Activated CD8-positive, alpha-beta memory T cell treated with anti-CD3 and anti-CD28 coated beads, Interleukin-2, amount 10 ng/mL, durations not matched to agents 7 days and 5 days (primary cell): ENCODE measurements at regions of chr19 and their contacts with region 1.

Region 1: DNA sequence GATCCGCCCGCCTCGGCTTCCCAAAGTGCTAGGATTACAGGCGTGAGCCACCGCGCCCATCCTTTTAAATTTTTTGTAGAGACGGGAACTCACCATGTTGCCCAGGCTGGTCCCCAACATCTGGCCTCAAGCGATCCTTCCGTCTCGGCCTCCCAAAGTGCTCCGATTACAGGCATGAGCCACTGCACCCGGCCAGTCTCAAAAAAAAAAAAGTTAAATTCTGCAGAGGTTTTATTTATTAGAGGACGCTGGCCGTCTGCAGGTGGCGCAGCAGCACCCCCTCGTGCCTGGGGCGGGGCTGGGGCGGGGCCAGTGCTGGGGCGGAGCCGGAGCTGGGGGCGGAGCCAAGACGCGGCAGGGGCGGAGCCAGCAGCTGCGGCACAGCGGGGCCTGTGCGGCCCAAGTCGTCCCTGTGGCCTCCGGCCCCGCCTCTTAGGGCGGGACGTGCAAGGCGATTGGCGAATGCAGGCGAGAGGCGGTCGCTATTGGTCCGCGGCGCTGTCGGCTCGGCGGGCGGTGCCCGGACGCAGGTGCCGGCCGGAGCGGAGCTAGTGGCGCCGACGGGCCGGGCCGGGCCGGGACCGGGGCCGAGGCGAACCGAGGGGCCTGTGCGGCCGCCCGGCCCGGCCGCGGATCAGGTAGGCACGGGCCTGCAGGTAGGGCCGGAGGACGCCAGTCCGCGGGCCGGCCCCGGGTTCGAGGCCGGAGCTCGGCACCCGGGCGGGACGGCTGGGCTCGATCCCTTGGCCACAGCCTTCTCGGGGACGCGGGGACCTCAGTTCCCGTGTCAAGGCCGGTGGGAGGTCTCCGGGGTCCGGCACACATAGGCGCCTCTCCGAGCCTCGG is at the start of gene MARCHF2:
- DNase-seq: peak; percentile 97
- ATAC-seq: peak; percentile 100
- H3K4me3 Mint-ChIP-seq: peak within 1 kb of the TSS; percentile 54
- H3K27ac Mint-ChIP-seq: peak within 1 kb of the TSS; percentile 61
- H3K4me1 Mint-ChIP-seq: peaks cover 8% of the 10 kb centered on the region
- H3K27me3 Mint-ChIP-seq: no peaks in the 10 kb centered on the region
- total RNA-seq, gene MARCHF2: 16.5 to 20.9 TPM

Region 2: GRCh38 chr19:8423817-8424223 is 10.8 kb after region 1 on chr19:
- CTCF ChIA-PET with region 1: interaction called, 15 read pairs
- DNase-seq: no peak
- ATAC-seq: no peak
- H3K4me3 Mint-ChIP-seq: no peak overlapping the region
- H3K27ac Mint-ChIP-seq: no peak overlapping the region
- H3K4me1 Mint-ChIP-seq: no peaks in the 10 kb centered on the region
- H3K27me3 Mint-ChIP-seq: no peaks in the 10 kb centered on the region

Region 3: DNA sequence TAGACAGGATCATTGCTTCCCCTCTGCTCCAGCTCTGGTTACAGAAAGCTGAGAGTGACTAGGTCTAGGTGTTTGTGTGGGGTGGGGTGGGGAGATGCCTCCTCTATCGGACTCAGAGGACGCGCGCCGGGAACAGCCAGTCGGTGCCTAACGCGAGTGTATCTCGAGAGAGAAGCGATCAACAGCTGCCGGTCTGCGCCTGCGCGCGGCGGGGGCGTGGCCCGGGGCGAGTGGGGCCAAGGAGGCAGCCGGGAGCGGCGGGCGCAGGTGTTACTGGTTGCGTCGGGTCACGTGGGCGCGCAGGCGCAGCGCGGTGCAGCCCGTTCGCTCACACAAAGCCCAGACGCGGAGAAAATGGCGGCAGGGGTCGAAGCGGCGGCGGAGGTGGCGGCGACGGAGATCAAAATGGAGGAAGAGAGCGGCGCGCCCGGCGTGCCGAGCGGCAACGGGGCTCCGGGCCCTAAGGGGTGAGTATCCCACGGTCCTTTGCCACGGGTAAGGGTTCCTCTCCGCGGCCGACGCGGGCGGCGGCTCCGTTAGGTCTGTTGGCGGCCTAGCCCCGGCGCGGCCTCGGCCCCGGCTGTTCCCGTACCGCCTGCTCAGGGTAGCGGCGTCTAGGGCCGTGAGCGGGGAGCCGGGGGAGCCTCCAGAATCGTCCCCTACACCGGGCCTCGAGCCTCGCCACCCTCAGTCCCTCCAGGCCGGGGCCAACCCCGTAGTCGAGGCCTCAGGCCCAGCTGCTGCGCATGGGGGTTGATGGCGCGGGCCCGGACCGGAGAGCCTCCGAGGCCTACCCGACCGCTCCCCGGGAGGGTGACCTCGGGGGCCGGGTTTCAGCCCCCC is 31.9 kb after region 1 on chr19 and contains the start of gene HNRNPM:
- CTCF ChIA-PET with region 1: interaction called, 35 read pairs
- DNase-seq: peak; percentile 100
- ATAC-seq: peak; percentile 95
- H3K4me3 Mint-ChIP-seq: peak within 1 kb of the TSS; percentile 86
- H3K27ac Mint-ChIP-seq: peak within 1 kb of the TSS; percentile 98
- H3K4me1 Mint-ChIP-seq: peaks cover 36% of the 10 kb centered on the region
- H3K27me3 Mint-ChIP-seq: no peaks in the 10 kb centered on the region
- total RNA-seq, gene HNRNPM: 226 to 309 TPM

Region 4: DNA sequence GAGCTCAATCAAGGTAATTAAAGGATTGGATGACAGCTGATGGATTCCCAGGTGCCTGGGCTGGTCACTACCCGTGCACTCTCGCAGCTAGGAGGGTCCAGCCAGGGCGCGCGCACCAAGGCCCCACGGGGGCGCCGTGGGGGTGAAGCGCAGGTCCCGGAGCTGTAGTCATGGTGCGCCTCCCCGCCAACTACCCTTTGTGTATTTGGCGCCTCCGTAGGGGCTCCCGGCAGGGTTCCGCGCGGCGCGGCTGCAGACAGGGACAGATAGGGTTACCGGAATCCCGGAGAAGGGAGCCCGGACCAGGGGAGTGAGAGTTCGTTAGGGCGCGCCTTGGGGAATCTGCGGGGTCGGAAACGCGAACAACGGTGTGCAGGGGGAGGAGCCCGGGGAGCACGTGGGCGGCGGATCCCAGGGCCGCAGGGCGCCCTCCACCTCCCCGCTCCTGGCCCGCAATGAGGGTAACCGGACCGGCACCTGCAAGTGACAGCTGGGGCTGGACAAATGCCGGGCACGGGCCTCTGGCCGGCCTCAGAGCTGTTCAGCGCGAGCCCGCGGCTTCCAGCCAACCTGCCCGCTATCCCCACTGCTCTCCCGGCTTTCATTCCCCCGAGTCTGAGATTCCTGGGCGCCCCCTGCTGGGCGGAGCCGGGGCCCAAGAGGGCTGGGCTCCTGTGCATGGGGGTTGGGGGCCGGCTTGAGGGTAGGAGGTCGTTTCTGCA is 92.8 kb after region 1 on chr19:
- CTCF ChIA-PET with region 1: interaction called, 40 read pairs
- DNase-seq: peak; percentile 71
- ATAC-seq: peak; percentile 83
- H3K4me3 Mint-ChIP-seq: peak overlapping the region; percentile 82
- H3K27ac Mint-ChIP-seq: peak overlapping the region; percentile 78
- H3K4me1 Mint-ChIP-seq: peaks cover 15% of the 10 kb centered on the region
- H3K27me3 Mint-ChIP-seq: no peaks in the 10 kb centered on the region

Region 5: DNA sequence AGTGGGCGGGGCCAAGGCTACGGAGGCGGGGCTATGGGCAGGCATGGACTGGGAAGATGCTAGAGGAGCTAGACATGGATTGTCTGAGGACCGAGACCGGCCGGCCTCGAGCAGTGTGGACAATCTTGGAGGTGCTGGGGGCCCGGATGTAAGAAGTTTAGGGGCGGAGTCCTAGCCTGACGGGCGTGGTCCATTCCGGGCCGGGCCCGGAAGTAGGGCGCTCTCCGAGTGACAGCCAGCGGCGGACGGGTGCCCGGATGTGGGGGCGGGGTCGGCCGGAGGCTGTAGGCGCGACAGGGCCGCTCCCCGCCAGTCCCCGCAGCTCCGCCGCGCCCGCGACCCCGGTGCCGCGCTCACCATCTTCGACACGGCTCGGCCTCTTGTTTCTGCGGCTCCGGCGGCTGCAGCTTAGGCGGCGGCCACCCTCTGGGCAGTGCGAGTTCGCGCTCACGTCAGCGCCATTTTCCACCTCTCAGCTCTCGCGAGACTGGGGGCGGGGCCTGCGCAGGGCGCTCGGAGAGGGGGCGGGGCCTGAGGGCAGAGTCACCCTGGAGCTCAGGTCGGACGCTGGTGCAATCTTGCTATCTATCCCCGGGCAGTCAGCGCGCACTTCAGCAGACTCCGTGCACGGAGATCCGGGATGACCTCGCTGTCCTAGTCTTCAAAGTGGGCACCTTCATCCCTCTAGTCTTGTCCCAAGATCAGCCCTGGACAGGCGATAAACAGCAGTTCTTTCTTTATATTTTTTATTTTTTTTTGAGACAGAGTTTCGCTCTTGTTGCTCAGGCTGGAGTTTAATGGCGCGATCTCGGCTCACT is 100.9 kb after region 1 on chr19 and contains the start of gene ZNF414:
- CTCF ChIA-PET with region 1: interaction called, 11 read pairs
- DNase-seq: peak; percentile 97
- ATAC-seq: peak; percentile 85
- H3K4me3 Mint-ChIP-seq: peak within 1 kb of the TSS; percentile 80
- H3K27ac Mint-ChIP-seq: peak within 1 kb of the TSS; percentile 98
- H3K4me1 Mint-ChIP-seq: peaks cover 58% of the 10 kb centered on the region
- H3K27me3 Mint-ChIP-seq: no peaks in the 10 kb centered on the region
- total RNA-seq, gene ZNF414: 23.8 to 38.5 TPM

Region 6: DNA sequence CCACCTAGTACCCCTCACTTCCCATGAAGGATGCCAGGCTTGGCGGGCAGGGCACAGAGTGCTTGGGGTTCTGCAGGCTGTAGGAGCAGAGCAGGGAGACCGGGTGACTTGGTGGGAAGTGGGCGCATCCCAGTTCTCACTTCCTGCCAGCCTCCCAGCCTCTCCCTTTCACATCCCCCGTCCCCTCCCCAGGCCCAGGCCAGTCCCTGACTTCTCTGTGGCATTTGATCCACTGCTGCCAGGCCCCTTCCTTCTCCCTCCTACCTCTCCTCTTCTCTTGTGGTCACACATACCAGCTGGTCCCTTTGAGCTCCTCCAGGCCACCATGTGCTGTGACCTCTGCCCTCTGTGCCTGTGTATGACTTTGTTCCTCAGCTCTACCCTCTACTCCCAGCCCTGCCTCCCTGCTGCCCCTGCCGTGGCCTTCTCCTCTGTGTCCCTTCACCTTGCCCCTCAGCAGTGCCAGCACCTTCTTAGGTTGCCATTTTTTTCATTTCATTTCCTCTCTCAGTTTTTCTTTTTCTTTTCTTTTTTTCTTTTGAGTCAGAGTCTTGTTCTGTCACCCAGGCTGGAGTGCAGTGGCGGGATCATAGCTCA is 144.7 kb after region 1 on chr19:
- CTCF ChIA-PET with region 1: no interaction called
- DNase-seq: no peak
- ATAC-seq: no peak
- H3K4me3 Mint-ChIP-seq: no peak overlapping the region
- H3K27ac Mint-ChIP-seq: peak overlapping the region; percentile 84
- H3K4me1 Mint-ChIP-seq: peaks cover 32% of the 10 kb centered on the region
- H3K27me3 Mint-ChIP-seq: no peaks in the 10 kb centered on the region

Region 7: GRCh38 chr19:8575467-8575997 is 162.5 kb after region 1 on chr19:
- CTCF ChIA-PET with region 1: interaction called, 27 read pairs
- DNase-seq: peak; percentile 84
- ATAC-seq: peak; percentile 45
- H3K4me3 Mint-ChIP-seq: peak overlapping the region; percentile 83
- H3K27ac Mint-ChIP-seq: peak overlapping the region; percentile 97
- H3K4me1 Mint-ChIP-seq: peaks cover 71% of the 10 kb centered on the region
- H3K27me3 Mint-ChIP-seq: peaks cover 7% of the 10 kb centered on the region

Region 8: DNA sequence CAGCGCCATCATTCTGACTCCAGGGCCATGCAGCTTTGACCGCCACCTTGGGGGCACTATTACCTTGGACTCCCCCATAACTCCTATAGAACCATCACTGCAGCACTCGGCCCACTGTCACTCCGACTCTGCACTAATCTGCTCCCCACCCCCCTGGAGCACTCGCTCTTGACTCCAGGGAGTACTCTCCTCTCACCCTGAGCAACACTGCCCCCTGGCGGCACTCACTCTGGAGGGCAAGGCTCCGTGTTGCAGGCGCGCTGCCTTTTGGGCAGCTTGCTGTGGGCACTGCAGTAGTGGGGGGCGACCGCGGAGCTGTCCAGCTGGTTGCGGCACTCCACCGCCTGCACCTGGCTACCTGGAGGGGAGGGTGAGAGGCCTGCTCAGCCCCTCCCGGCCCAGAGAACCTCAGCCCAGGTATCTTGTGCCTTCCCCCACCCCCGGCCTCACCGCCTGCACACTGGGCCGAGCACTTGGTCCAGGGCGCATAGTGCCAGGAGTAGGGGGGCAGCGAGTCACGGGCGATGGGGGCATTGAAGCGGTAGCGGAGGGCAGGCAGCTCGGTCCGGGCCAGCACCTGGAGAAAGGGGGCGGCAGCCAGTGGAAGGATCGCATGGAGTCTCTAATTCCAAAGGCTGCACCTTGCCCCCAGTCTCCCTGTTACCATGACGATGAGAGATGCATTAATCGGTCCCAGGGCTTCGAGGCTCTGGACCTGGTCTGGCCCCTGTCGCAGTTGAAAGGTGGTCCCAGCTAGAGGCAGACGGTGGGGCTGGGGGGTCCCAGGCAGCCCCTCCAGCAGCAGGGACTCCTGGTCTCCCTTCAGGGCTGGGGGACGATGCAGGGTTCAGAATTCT is 173.1 kb after region 1 on chr19:
- CTCF ChIA-PET with region 1: interaction called, 27 read pairs
- DNase-seq: peak; percentile 78
- ATAC-seq: peak; percentile 68
- H3K4me3 Mint-ChIP-seq: no peak overlapping the region
- H3K27ac Mint-ChIP-seq: no peak overlapping the region
- H3K4me1 Mint-ChIP-seq: peaks cover under 1% of the 10 kb centered on the region
- H3K27me3 Mint-ChIP-seq: no peaks in the 10 kb centered on the region